BJ (cell line): ENCODE measurements at regions of chr14 and their contacts with region 1.

Region 1: DNA sequence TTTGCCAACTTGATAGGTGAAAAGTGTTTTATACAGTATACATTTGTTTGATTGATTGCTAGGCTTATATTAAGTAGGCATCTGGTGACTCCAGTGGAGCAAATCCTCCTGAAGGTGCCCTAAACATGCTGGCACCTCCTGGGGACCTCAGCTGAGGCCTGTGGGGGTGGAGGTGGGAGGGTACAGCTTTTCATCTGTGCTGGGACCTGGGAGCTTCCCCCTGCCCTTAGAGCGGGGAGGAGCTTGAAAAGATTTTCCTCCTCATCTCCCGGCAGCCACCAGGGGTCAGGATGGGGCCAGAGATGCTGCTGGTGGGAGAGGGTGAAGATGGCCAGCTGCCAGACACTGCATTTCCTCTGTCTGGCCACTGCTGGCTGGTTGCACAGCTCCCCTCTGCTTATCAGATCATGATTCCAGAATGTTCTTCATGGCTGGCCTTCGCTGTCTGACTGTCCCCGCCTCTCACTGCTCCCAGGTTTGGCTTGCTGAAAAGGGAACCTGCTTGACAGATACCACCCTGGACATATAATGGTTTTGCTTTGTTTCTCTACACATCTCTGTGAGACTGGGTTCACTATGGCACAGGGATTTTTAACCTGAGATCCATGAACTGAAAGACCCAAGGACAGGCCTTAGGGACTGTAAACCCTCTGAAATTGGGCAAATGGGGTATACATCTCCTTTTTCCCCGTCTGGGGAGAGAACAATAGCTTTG is 10.5 kb upstream of the JPH4 start:
- DNase-seq: peak; percentile 13
- H3K4me3 ChIP-seq: no peak overlapping the region
- H3K27me3 ChIP-seq: no peaks in the 10 kb centered on the region
- CTCF ChIP-seq: peak; percentile 83

Region 2: DNA sequence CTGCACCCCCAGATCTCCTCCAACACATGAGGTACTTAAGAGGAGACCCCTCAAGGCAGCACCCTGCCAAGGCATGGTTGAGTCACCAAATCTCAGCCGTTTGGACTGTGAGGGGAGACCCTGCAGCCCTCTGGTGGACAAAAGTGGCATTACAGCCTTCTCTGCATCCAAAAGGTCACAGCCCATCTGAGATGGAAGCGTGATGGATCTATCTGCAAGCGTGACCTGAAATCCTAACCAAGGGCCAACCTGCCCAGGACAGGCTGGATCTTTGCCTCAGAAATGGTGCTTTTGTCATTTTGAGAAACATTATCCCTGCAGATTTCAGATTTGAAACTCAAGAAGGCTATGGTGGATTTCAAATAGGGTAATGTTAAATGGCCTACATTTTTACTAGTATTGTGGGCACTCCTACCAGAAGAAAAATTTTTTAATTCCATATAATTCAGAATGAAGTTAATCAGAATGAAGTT is 340.8 kb after region 1 on chr14:
- CTCF ChIA-PET with region 1: interaction called, 12 read pairs
- POLR2A ChIA-PET with region 1: no interaction called
- DNase-seq: no peak
- H3K4me3 ChIP-seq: no peak overlapping the region
- H3K27me3 ChIP-seq: no peaks in the 10 kb centered on the region; the same call in 1 of the 2 replicates
- CTCF ChIP-seq: peak; percentile 96